ENCODE measurements at regions of chr6 and their contacts with region 1.

Region 1: DNA sequence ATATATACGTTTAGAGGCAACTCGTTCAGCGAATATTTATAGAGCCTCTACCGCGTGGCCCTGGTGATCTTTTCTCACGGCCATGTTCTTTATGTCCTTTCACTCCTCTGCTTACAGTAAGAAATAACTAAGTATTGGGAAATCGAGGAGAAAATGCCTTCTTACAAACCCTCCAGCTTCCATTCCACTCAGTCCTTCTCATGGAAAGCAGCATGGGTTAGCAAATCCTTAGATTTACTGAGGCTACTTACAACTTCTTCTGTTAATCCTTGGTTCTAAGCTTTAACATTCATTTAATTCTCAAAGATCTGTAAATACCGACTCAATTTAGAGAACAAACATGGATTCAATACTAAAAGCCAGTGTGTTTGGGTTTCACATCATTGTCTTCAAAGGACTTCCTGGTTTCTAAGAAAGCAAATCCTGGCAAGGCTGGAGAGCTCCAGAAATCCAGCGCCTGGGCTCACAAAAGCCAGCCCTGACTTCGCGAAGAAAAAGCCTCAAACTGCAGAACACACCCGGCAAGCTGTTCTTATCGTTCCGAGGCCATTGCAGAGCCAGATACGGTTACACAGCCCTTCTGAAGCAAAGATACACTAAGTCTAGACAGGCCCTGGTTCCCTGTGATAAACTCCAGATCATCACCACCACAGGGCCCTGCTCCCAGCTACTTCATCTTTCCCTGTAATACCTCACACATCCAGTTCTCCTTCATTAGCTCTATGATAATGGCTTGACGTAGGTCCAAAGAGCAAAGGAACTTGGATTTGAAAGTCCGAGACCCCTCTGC is 19.2 kb downstream of the AGPAT4 start:
- DNase-seq: no peak
- H3K4me3 ChIP-seq: no peak overlapping the region
- H3K27ac ChIP-seq: no peak overlapping the region
- H3K4me1 ChIP-seq: no peaks in the 10 kb centered on the region
- H3K27me3 ChIP-seq: no peaks in the 10 kb centered on the region
- CTCF ChIP-seq: no peak
- POLR2A ChIP-seq: no peak

Region 2: GRCh38 chr6:161265971-161266370 is 11.3 kb after region 1 on chr6:
- intact Hi-C with region 1: loop called (anchors 1 kb)
- DNase-seq: no peak
- H3K4me3 ChIP-seq: no peak overlapping the region
- H3K27ac ChIP-seq: no peak overlapping the region
- H3K4me1 ChIP-seq: no peaks in the 10 kb centered on the region
- H3K27me3 ChIP-seq: no peaks in the 10 kb centered on the region
- CTCF ChIP-seq: no peak
- POLR2A ChIP-seq: no peak

Region 3: DNA sequence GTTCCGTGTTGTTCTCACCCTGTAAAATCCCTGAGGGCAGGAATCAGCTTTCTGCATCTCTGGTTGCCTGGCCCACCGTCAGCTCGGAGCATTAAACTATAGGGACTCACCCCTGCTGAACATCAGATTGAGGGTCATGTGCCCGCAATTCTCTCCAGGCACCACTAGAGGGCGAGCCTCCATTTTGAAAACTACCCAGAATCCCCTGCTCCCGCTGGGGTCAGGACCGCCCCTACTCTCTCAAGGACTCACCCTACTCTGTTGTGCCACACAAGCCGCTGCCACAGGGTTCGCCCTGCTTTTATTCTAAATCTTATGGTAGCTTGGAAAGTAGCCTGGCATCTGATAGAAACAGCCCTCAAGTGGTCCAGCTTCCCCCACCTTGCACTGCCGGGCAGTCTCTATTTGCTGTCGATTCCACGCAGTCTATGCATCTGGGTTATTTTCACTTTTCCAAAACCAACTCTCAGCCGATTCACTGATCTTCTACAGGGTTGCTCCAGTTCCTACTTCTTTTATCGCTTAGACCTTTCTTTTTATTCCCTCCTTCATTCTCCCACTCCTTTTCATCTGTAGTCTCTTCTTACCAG is 1915.7 kb after region 1 on chr6:
- intact Hi-C with region 1: no loop called
- DNase-seq: no peak
- H3K4me3 ChIP-seq: no peak overlapping the region
- H3K27ac ChIP-seq: no peak overlapping the region
- H3K4me1 ChIP-seq: no peaks in the 10 kb centered on the region
- H3K27me3 ChIP-seq: no peaks in the 10 kb centered on the region
- CTCF ChIP-seq: peak in 2 of 3 donors; percentile 12 to 33
- POLR2A ChIP-seq: no peak